Mucosa of descending colon (tissue), 3 donors: ENCODE measurements at regions of chr19 and their contacts with region 1.

Region 1: DNA sequence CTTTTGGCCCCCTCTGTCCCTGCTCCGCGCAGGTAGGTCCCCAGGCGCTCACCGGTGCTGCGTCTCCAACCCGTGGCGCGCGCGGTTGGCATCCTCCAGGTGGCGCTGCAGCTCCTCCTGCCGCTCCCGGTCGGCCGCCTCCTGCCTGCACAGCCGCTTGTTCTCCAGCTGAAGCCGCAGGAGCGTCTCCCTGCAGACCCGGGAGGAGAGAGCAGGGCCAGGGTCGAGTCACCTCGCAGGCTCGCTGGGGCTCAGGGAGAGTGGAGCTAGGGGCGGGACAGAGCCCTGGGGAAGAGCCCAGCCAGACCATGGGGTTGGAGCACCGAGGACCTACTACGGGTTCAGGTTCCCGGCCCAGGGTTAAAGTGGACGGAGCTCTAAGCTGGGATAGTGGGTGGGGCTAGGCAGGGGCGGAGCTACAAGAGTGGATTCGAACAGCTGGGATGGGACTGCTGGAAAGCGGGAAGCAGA is 9.3 kb downstream of the HOOK2 start:
- DNase-seq: peak in 2 of 3 donors; percentile 84 to 94
- ATAC-seq: peak; percentile 88
- H3K4me3 ChIP-seq: no peak overlapping the region
- H3K4me1 ChIP-seq: peaks cover 13% of the 10 kb centered on the region
- CTCF ChIP-seq: peak; percentile 94

Region 2: DNA sequence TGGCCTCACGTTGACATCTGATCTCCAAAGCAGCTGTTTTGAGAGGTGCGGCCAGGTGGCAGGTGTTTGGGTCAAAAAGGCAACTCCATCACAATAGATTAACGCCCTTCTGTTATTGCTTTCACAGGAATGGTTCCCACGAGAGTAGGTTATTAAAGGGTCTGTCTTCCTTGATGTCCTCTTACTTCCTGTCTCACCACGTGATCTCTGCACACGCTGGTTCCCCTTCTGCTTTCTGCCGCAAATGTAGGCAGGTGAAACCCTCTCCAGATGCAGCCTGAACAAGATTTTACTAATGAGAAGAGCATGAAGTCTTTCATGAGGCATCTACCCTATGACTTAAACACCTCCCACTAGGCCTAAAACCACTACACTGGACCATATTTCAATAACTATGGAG is 192.1 kb before region 1 on chr19:
- intact Hi-C with region 1: no loop called
- DNase-seq: peak in 1 of 3 donors; percentile 8
- ATAC-seq: peak; percentile 56
- H3K4me3 ChIP-seq: no peak overlapping the region
- H3K4me1 ChIP-seq: no peaks in the 10 kb centered on the region
- CTCF ChIP-seq: no peak

Region 3: DNA sequence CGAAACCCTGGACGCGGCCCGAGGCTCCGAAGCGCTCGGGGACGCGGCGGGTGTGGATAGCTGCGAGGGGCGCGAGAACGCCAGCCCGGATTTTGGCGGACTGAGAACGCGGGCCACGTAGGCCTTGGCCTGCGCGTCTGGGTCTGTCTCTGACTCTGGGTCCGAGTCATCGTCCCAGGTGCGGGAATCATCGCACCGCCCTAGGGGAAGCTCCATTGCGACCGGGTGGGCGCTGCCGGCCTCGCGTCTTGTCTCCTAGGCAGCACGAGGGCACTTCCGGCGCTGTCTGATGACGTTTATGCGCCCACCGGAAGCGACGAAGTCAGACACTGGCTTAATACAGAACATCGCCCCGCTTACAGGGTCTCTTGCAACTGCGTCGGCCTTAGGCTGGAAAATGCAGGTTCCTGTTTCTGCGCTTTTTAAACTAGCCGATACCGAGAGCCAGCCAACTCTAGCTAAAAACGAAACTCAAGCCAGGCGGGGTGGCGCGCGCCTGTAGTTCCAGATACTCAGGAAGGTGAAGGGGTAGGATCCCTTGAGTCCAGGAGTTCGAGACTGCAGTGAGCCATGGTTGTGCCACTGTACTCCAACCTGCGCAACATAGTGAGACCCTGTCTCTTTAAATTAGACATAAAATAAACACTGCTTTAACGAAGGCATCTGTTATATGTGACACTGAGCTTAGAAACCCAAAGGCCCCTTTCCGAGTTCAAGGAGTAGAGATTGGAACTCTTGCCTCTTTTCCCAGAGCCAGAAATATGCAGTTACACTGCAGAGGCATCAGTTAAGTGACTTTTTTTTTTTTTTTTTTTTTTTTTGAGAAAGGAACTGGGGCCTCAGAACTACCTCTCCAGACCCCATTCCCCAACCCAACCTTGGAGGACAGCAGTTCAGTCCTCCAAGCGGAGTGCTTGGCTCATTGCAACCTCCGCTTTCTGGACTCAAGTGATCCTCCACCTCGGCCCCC is 69.4 kb before region 1 on chr19 and contains the start of gene FBXW9:
- intact Hi-C with region 1: no loop called
- DNase-seq: peak; percentile 96 to 99 (median 97)
- ATAC-seq: peak; percentile 97
- H3K4me3 ChIP-seq: peak within 1 kb of the TSS; percentile 65
- H3K4me1 ChIP-seq: peaks cover 12% of the 10 kb centered on the region
- CTCF ChIP-seq: no peak
- total RNA-seq, gene FBXW9: 6.0 to 8.9 (median 7.8) TPM

Region 4: DNA sequence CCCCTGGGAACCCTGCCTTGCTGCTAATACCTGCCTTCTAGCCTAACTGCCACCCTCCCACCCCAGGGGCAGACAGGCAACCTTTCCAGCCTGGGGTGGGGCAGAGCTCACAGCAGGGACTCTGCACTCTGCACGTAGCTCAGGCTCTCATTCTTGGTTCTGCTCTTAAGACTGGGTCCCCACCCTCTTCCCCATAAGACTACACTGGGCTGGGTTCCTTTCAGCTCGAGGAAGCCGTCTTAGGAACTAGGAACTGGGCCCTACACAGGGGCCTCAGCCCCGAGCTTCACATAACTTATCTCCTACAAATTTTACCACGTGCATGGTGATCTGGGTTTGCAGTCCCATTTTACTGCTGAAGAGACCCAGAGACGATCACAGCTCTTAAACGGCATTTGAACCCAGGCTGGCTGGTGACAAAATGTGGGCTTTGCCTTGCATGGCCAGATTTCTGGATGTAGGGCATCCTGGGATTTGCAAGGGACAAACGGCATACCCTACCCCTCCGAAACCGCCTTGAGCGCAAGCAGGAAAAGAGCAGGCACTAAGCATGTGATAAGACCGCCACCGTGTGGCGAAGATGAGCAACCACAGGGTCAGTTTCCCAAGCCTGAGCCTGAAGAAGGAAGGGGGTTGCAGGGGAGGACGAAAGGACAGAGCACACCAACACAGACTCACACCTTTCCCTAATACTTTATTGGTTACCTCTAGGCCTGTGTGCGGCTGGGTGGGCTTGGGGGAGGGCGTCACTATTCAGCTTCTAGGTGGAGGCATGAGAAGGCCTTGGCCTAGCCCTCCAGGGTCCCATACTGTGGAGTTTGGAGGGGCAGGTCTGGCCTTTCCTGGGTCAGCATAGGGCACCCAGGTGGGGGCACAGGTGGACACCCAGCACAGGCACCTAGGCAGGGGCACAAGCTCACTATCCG is 30.3 kb after region 1 on chr19:
- intact Hi-C with region 1: loop called (anchors 5 kb)
- DNase-seq: peak; percentile 78 to 79 (median 78)
- ATAC-seq: peak; percentile 43
- H3K4me3 ChIP-seq: no peak overlapping the region
- H3K4me1 ChIP-seq: peaks cover 28% of the 10 kb centered on the region
- CTCF ChIP-seq: peak; percentile 86

Region 5: GRCh38 chr19:12847159-12848139 is 81.4 kb after region 1 on chr19:
- intact Hi-C with region 1: loop called in 1 of 2 experiments (anchors 5 kb)
- DNase-seq: peak; percentile 82 to 91 (median 90)
- ATAC-seq: peak; percentile 100
- H3K4me3 ChIP-seq: no peak overlapping the region
- H3K4me1 ChIP-seq: peaks cover 3% of the 10 kb centered on the region
- CTCF ChIP-seq: peak; percentile 98